Activated CD4-positive, alpha-beta memory T cell treated with anti-CD3 and anti-CD28 coated beads for 36 hours (primary cell): ENCODE measurements at regions of chr11 and their contacts with region 1.

Region 1: GRCh38 chr11:93543292-93543977 is at the start of gene SMCO4:
- DNase-seq: peak; percentile 87
- H3K4me3 Mint-ChIP-seq: peak within 1 kb of the TSS; percentile 87
- H3K27ac Mint-ChIP-seq: peak within 1 kb of the TSS; percentile 85
- H3K4me1 Mint-ChIP-seq: peaks cover 33% of the 10 kb centered on the region
- H3K27me3 Mint-ChIP-seq: no peaks in the 10 kb centered on the region
- total RNA-seq, gene SMCO4: 40.9 to 41.2 TPM

Region 2: DNA sequence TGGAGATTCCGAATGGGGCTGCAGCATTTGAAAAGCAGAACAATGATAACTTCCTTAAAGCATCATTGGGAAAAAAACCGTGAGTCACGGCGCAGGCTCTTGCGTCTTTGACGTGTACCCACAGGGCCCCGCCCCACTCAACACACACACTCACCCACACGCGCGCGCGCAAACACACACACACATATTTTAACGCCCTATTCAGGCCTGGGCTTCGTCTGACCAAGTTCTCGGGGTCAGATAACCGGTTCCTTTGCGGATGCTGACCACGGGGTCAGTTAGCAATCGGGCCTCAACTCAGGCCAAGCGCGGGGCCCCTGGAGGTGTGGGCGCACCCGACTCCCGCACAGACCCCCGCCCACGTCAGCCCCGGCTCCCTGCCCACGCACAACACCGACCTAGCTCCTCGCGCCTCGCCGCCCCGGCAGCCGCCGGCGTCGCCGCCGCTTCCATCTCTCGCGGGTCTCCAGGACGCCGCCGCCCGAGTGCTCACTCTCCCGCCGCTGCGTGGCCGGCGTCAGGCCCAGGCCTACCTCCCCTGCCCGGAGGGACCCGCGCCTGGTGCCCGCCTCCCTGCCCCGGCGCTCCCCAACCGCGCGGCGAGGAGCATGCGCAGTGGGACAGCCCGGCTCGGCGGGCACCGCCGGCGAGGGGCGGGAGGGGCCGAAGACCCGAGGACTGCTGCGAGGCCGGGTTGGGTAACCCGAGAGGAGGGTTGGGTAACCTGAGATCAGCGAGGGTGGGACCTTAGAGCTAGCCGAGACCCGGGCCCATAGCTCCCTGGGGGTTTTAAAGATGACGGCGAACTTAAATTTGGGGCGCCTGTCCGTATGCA is 345.8 kb before region 1 on chr11 and contains the start of gene SLC36A4:
- CTCF ChIA-PET with region 1: no interaction called
- POLR2A ChIA-PET with region 1: no interaction called
- intact Hi-C with region 1: loop called (anchors 1 kb)
- DNase-seq: peak; percentile 92
- H3K4me3 Mint-ChIP-seq: peak within 1 kb of the TSS; percentile 98
- H3K27ac Mint-ChIP-seq: peak within 1 kb of the TSS; percentile 94
- H3K4me1 Mint-ChIP-seq: peaks cover 23% of the 10 kb centered on the region
- H3K27me3 Mint-ChIP-seq: peaks cover 2% of the 10 kb centered on the region
- total RNA-seq, gene SLC36A4: 13.9 to 14.0 TPM

Region 3: DNA sequence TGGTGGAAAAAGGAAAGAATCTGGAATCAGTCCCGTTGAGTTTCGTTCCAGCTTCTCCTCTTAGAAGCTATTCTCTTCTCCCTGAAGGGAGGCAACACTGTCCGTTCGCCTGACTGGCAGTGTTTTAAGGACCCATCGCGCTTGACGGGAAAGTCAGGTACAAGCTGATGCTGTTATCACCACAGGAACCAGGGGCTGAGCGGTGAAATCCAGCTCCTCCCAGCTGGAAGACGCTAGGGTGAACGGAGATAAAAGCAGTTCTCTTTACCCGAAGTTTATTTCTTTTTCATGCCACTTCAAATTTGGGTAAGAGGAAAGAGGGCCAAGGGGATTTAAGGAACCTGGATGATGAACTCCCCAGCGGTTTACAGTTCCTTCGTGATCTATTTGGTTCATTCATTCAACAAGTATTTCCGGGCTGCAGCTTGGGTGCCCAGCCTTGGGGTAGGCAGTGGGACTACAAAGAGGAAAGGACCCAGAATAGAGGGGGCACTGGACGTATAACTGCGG is 213.4 kb before region 1 on chr11:
- CTCF ChIA-PET with region 1: no interaction called
- POLR2A ChIA-PET with region 1: no interaction called
- intact Hi-C with region 1: loop called (anchors 5 kb)
- DNase-seq: peak; percentile 12
- H3K4me3 Mint-ChIP-seq: peak overlapping the region; percentile 23
- H3K27ac Mint-ChIP-seq: no peak overlapping the region
- H3K4me1 Mint-ChIP-seq: peaks cover 4% of the 10 kb centered on the region
- H3K27me3 Mint-ChIP-seq: peaks cover 31% of the 10 kb centered on the region

Region 4: GRCh38 chr11:93529707-93530467 is 13.5 kb before region 1 on chr11:
- CTCF ChIA-PET with region 1: interaction called, 22 read pairs
- POLR2A ChIA-PET with region 1: interaction called, 11 read pairs
- intact Hi-C with region 1: loop called (anchors 1 kb)
- DNase-seq: no peak
- H3K4me3 Mint-ChIP-seq: no peak overlapping the region
- H3K27ac Mint-ChIP-seq: peak overlapping the region; percentile 52
- H3K4me1 Mint-ChIP-seq: peaks cover 72% of the 10 kb centered on the region
- H3K27me3 Mint-ChIP-seq: no peaks in the 10 kb centered on the region

Region 5: DNA sequence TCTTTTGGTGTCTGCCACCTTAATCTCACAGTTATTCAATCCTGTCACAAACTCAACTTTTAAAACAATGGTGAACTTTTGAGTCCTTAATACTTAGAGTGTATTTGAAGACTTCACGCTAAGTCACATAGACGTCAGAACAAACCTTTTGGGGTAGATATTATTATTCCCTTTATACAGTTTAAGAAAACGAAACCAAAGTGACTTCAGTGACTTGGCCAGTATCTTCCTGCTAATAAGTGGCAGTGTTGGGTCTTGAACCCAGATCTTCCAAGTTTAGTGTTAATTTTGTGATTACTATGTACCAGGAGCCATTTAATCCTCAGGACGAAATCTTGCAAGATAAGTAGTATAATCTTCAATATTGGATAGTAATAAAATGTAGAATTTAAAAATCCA is 118.7 kb after region 1 on chr11:
- CTCF ChIA-PET with region 1: no interaction called
- POLR2A ChIA-PET with region 1: no interaction called
- intact Hi-C with region 1: loop called (anchors 2 kb)
- DNase-seq: no peak
- H3K4me3 Mint-ChIP-seq: peak overlapping the region; percentile 94
- H3K27ac Mint-ChIP-seq: peak overlapping the region; percentile 95
- H3K4me1 Mint-ChIP-seq: peaks cover 43% of the 10 kb centered on the region
- H3K27me3 Mint-ChIP-seq: no peaks in the 10 kb centered on the region

Region 6: GRCh38 chr11:94128746-94129511 is 585.5 kb after region 1 on chr11 and contains the start of gene PANX1:
- CTCF ChIA-PET with region 1: no interaction called
- POLR2A ChIA-PET with region 1: no interaction called
- intact Hi-C with region 1: loop called (anchors 2 kb)
- DNase-seq: peak; percentile 82
- H3K4me3 Mint-ChIP-seq: no peak within 1 kb of the TSS
- H3K27ac Mint-ChIP-seq: peak within 1 kb of the TSS; percentile 90
- H3K4me1 Mint-ChIP-seq: peaks cover 28% of the 10 kb centered on the region
- H3K27me3 Mint-ChIP-seq: no peaks in the 10 kb centered on the region
- total RNA-seq, gene PANX1: 11.4 to 11.7 TPM